Thyroid gland (tissue), 4 donors: ENCODE measurements at regions of chr7 and their contacts with region 1.

Region 1: DNA sequence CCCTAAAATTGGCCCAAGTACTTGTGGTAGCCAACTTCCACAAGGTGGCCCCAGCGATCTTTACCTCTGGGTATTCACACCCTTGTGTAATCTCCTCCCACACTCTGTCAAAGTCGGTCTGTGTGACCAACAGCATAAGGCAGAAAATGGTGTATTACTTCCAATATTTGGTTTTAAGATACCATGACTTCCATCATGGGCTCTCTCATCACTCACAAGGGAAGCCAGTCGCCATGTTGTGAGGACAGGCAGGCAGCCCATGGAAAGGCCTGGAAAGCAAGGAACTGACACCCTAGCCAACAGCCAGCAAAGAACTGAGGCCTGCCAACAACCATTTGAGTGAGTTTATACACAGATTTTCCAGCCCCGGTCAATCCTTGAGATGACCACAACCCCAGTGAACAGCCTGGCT is 91.0 kb upstream of the KMT2E start:
- DNase-seq: peak; percentile 77 to 78
- H3K4me3 ChIP-seq: no peak overlapping the region
- H3K27ac ChIP-seq: peak overlapping the region in 2 of 3 donors; percentile 50 to 55
- H3K4me1 ChIP-seq: peaks cover 3 to 5% of the 10 kb centered on the region in 2 donors
- H3K27me3 ChIP-seq: no peaks in the 10 kb centered on the region
- CTCF ChIP-seq: peak; percentile 25 to 84 (median 74)
- POLR2A ChIP-seq: no peak

Region 2: DNA sequence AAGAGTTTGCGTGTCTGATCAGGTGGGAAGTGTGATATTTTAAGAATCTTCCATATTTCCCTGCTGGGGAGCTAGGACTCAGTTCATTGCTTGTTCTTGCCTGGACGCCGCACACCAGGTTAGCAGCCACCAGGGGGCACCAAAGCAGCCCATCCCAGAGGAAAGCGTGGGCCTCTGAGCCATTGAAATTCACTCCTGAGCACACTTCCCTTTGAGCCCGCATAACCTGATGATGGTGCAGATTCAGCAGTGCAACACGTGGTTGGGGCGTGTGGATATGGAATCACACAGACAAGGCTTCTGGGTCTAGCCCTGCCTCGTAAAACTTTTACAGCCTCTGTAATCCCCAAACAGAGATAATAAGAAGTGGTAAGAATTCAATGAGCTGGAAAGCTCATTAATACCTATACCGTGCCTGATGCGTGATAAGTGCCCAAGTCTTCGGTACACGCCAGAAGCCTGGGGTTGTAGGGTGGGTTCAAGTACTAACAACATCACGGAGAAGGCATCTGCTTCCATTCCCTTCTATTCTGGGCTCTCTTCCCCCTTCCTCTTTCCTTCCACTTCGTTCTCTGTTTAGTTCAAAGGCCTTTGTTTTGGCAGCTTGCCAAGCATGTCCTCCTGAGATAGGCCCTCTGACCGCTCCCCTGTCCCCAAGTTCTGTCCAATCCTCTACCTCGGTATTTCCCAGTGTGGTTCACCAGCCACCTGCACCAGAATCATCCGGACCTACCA is 39.1 kb before region 1 on chr7:
- intact Hi-C with region 1: loop called (anchors 5 kb)
- DNase-seq: peak; percentile 84 to 90
- H3K4me3 ChIP-seq: no peak overlapping the region
- H3K27ac ChIP-seq: no peak overlapping the region
- H3K4me1 ChIP-seq: peaks cover 0 to 12% of the 10 kb centered on the region in 2 donors
- H3K27me3 ChIP-seq: no peaks in the 10 kb centered on the region
- CTCF ChIP-seq: peak; percentile 76 to 91 (median 78)
- POLR2A ChIP-seq: no peak

Region 3: GRCh38 chr7:105198223-105198622 is 275.2 kb after region 1 on chr7:
- intact Hi-C with region 1: no loop called
- DNase-seq: no peak
- H3K4me3 ChIP-seq: no peak overlapping the region
- H3K27ac ChIP-seq: no peak overlapping the region
- H3K4me1 ChIP-seq: peaks cover 0 to 5% of the 10 kb centered on the region in 2 donors
- H3K27me3 ChIP-seq: no peaks in the 10 kb centered on the region
- CTCF ChIP-seq: no peak
- POLR2A ChIP-seq: no peak

Region 4: DNA sequence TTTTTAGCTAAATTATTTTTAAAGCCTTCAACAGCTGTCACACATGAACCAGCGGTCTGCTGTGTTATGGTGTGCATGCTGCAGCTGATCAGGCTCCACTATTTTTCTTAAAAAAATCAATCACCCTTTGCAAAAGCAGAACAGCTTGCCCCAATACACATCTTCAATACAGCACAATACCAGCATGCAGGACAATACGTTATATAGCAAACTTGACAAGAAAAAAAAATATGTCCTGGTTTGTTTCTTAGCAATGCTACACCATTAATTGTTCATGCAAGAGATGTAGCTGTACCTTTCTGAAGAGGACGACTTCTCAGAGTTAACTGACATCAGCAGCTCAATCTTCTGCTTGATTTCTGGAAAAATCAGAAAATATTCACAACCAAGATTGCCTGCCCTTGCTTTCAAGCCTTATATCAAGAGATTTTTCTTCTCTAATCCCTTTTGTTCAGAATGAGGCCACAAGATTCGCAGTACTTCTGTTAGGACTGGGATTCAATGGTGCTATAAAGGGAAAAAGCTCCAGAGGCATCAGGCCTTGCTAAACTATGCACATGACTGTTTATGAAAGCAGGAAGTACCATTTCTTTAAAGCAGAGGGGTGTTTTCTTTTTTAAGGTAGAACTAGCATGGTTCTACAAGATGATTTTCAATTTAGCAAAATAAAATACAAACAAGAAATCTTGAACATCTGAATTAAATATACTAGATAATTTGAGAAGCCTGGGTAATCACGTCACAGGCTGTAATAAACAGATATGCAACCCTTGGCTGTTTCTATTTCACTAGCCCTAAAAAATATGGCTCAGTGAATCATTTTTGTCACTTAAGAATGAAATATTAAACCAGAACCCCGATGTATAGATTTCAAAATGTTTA is 345.7 kb after region 1 on chr7:
- intact Hi-C with region 1: no loop called
- DNase-seq: no peak
- H3K4me3 ChIP-seq: peak overlapping the region in 2 of 3 donors; percentile 26 to 32
- H3K27ac ChIP-seq: peak overlapping the region; percentile 42 to 74 (median 67)
- H3K4me1 ChIP-seq: peaks cover 16 to 36% of the 10 kb centered on the region in 2 donors
- H3K27me3 ChIP-seq: no peaks in the 10 kb centered on the region
- CTCF ChIP-seq: no peak
- POLR2A ChIP-seq: peak in 1 of 2 donors; percentile 71

Region 5: GRCh38 chr7:105487579-105488571 is 564.9 kb after region 1 on chr7:
- intact Hi-C with region 1: loop called (anchors 10 kb)
- DNase-seq: peak in 1 of 2 donors; percentile 4
- H3K4me3 ChIP-seq: no peak overlapping the region
- H3K27ac ChIP-seq: no peak overlapping the region
- H3K4me1 ChIP-seq: peaks cover 0 to 6% of the 10 kb centered on the region in 2 donors
- H3K27me3 ChIP-seq: no peaks in the 10 kb centered on the region
- CTCF ChIP-seq: peak in 4 of 6 experiments; percentile 22 to 41 (median 36)
- POLR2A ChIP-seq: no peak